Activated T-helper 2 cell treated with anti-CD3 and anti-CD28 coated beads, Interferon-gamma antibody, Interleukin-2, Interleukin-4, amounts not matched to agents 10 μg/mL and 5 μg/mL and 100 μg/mL, durations not matched to agents 14 hours and 24 hours and 36 hours (primary cell): ENCODE measurements at regions of chr7 and their contacts with region 1.

Region 1: GRCh38 chr7:35185907-35186731 is 67.8 kb downstream of the TBX20 start:
- DNase-seq: no peak
- H3K4me3 Mint-ChIP-seq: peak overlapping the region; percentile 67
- H3K27ac Mint-ChIP-seq: no peak overlapping the region
- H3K4me1 Mint-ChIP-seq: peaks cover 6% of the 10 kb centered on the region
- H3K27me3 Mint-ChIP-seq: peaks cover 31% of the 10 kb centered on the region

Region 2: GRCh38 chr7:35253710-35254495 is 67.8 kb after region 1 on chr7 and contains the start of gene TBX20:
- intact Hi-C with region 1: loop called (anchors 2 kb)
- DNase-seq: peak; percentile 29
- H3K4me3 Mint-ChIP-seq: peak within 1 kb of the TSS; percentile 71
- H3K27ac Mint-ChIP-seq: no peak within 1 kb of the TSS
- H3K4me1 Mint-ChIP-seq: peaks cover 11% of the 10 kb centered on the region
- H3K27me3 Mint-ChIP-seq: peaks cover 86% of the 10 kb centered on the region
- total RNA-seq, gene TBX20: 0.11 and 0.39 TPM in 2 replicates

Region 3: GRCh38 chr7:35519971-35520809 is 334.1 kb after region 1 on chr7:
- intact Hi-C with region 1: loop called (anchors 5 kb)
- DNase-seq: peak; percentile 34
- H3K4me3 Mint-ChIP-seq: no peak overlapping the region
- H3K27ac Mint-ChIP-seq: no peak overlapping the region
- H3K4me1 Mint-ChIP-seq: peaks cover 4% of the 10 kb centered on the region
- H3K27me3 Mint-ChIP-seq: peaks cover 16% of the 10 kb centered on the region

Region 4: DNA sequence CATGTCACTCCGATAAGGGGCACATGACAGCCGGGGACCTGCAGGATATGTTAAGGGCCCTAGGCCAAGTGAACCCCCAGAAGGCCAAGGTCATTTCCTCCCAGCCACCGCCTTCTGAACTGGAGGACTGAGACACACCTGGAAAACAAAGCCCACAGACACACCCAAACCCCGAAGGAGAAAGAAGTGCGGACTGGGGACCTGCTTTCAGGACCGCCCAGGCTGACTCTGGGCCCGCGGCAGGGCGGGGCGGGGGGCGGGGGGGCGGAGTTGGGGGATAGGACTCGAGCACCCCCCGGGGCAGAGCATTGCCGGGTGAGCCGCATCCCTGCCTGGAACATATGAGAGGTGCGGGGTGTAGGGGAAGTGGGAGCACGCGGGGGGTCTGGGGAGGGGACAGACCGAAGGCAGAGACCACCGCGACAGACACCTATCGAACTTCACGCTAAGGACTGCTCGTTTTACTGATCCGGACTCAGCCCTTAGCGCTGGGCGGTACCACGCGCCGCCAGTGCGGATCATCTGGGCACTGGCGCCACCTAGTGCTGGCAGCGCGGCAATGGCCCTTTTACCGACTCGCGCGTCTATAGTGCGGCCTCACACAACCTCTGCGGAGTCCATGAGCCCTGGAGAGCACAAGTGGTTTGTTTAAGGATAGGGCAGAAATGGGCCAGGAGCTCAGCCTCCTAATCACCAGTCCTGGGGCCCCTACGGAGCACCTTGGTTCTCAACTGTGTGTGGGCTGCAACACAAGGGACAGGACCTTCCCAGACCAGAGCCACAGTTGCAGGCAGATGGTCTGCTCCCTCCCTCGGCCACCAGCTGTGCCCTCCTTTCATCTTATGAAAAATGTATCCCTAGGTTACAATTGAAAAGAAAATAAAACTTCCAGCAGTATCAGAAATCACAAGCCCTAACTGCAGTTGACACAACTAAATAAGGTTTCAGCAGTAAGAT is 351.2 kb after region 1 on chr7:
- intact Hi-C with region 1: loop called (anchors 5 kb)
- DNase-seq: peak; percentile 63
- H3K4me3 Mint-ChIP-seq: peak overlapping the region; percentile 60
- H3K27ac Mint-ChIP-seq: no peak overlapping the region
- H3K4me1 Mint-ChIP-seq: peaks cover 2% of the 10 kb centered on the region
- H3K27me3 Mint-ChIP-seq: peaks cover 18% of the 10 kb centered on the region